Right cardiac atrium (tissue), 5 donors: ENCODE measurements at regions of chr22 and their contacts with region 1.

Region 1: DNA sequence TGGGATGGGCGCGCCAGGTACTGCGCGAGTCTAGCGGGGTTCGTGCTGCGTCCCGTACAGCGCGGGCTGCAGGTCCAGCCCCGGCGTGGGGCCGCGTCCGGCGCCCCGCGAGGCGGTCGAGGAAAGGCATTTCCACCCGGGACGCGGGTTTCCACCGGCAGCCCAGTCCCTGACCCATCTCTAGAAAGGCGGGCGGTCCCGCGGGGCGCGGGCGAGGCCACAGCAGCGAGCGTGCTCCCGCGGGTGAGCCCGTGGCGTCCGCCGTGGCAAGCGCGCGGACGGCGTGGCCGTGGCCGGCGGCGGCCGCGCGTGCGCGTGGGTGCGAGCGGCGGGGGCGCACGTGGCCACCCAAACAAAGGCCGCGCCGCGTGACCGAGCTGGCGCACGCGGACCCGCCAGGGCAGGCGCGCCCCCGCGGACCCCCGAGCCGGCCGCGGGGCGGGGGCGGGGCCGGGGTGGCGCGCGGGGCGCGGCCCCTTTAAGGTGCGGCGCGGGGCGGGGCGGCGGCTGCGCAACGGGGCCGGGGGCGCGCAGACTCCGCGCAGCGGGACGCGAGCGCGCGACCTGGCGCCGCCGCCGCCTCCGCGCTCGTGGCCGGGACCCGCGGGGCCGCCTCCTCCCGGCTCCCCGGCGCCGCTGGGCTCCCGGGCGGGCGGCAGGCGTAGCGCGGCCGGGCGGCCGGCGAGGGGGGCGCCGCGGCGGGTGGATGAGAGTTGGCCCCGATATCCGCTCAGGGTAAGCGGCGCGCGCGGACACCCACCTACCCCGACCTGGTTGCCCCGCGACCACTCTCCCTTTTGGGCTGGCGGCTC is 39.3 kb upstream of the CELSR1 start:
- DNase-seq: peak; percentile 66 to 88 (median 85)
- ATAC-seq: peak; percentile 16 to 29
- H3K4me3 ChIP-seq: peak overlapping the region; percentile 93
- H3K27ac ChIP-seq: peak overlapping the region; percentile 62
- H3K4me1 ChIP-seq: peaks cover 25% of the 10 kb centered on the region
- H3K27me3 ChIP-seq: no peaks in the 10 kb centered on the region

Region 2: GRCh38 chr22:46674367-46674781 is 97.6 kb after region 1 on chr22:
- intact Hi-C with region 1: loop called in 1 of 4 experiments (anchors 10 kb)
- DNase-seq: peak; percentile 74 to 81 (median 75)
- ATAC-seq: peak in 1 of 2 donors; percentile 65
- H3K4me3 ChIP-seq: no peak overlapping the region
- H3K27ac ChIP-seq: no peak overlapping the region
- H3K4me1 ChIP-seq: no peaks in the 10 kb centered on the region
- H3K27me3 ChIP-seq: no peaks in the 10 kb centered on the region

Region 3: GRCh38 chr22:46737976-46738646 is 161.3 kb after region 1 on chr22 and contains the start of gene CERK:
- intact Hi-C with region 1: loop called in 1 of 4 experiments (anchors 10 kb)
- DNase-seq: peak; percentile 84 to 96 (median 90)
- ATAC-seq: peak; percentile 82 to 85
- H3K4me3 ChIP-seq: peak within 1 kb of the TSS; percentile 98
- H3K27ac ChIP-seq: peak within 1 kb of the TSS; percentile 97
- H3K4me1 ChIP-seq: peaks cover 21% of the 10 kb centered on the region
- H3K27me3 ChIP-seq: no peaks in the 10 kb centered on the region
- total RNA-seq, gene CERK: 59.5 to 83.5 (median 68.7) TPM